ENCODE measurements at regions of chr3 and their contacts with region 1.

Region 1: DNA sequence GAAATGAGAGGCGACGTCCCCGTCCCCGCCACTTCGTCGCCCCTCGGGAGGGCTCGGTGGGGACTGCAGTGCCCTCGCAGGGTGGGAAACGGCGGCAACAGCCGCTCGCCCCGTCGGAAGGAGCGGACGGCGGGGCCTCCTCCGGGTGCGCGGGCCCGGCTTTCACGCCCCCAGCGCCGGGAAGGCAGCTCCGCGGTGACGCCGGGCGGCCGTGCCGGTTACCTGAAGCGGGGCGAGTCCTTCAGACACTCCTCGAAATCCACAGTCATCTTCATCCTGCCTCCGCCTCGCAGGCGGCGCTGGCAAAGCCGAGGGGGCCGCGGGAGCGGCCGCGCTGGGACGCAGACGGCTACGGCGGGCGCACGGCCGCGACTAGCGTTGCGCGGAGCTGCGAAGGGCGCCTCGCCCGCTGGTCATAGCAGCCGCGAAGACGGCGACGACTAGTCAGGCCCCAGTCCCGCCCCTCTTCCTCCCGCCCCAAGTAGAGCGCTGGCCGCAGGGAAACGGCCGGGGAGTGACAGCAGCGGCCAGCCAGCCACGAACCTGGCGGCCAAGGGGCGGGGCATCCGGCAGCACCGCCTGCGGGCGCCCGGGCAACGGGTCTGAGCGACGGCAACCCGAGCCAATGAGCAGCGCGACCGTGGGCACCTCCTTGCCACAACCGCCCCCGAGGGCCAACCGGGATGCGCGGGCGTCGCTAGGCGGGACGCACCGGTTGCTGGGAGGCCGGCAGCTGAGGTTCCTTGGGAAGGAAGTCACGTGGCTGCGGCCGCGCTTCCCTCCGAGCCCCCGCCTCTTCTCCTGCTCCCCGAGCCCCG is at the start of gene ACAP2:
- DNase-seq: peak; percentile 99
- ATAC-seq: peak; percentile 91
- H3K4me3 ChIP-seq: peak within 1 kb of the TSS; percentile 84
- H3K27ac ChIP-seq: no peak within 1 kb of the TSS
- H3K4me1 ChIP-seq: peaks cover 35% of the 10 kb centered on the region
- H3K27me3 ChIP-seq: no peaks in the 10 kb centered on the region
- CTCF ChIP-seq: no peak
- total RNA-seq, gene ACAP2: 27.0 and 33.5 TPM in 2 replicates

Region 2: GRCh38 chr3:195271116-195271858 is 171.5 kb before region 1 on chr3 and contains the start of gene XXYLT1:
- CTCF ChIA-PET with region 1: interaction called, 13 read pairs
- POLR2A ChIA-PET with region 1: interaction called, 4 read pairs
- intact Hi-C with region 1: loop called (anchors 1 kb)
- DNase-seq: peak; percentile 91
- ATAC-seq: peak; percentile 81
- H3K4me3 ChIP-seq: peak within 1 kb of the TSS; percentile 82
- H3K27ac ChIP-seq: peak within 1 kb of the TSS; percentile 57
- H3K4me1 ChIP-seq: peaks cover 21% of the 10 kb centered on the region
- H3K27me3 ChIP-seq: no peaks in the 10 kb centered on the region
- CTCF ChIP-seq: peak; percentile 98
- total RNA-seq, gene XXYLT1: 25.5 and 27.8 TPM in 2 replicates

Region 3: DNA sequence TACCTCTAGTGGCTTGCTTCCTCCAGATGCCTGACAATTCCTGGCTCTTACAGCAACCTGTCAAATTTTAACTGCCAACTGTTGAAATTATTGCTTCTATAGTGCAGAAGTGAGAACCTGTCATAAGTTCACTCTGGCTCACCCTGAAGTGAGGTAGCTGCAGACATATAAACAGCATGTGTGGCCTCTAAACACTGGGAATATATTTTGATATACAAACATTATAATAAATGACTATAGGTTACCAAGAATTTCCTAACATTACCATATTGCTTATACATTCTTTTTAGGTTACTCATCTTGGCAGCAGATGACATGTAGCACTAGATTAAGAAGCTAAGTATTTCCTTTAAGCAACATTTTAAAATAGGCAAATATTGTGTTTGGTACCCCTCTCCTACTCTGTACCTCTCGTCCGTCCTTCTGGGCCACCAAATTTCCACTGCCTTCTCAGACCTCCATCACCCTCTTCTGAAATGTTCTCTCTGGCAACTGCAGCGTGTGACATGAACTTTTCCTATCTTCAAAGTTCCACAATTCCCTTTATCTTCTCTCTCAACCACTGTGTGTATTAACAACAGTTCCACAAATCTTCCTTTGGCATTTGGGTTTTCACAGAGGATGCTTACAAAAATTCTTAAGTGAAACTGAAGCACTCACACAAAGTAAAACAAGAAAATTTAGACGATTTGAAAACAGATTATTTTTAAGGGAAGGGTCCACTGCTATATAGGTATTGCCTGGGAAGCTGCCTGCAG is 156.5 kb before region 1 on chr3:
- CTCF ChIA-PET with region 1: no interaction called
- POLR2A ChIA-PET with region 1: no interaction called
- intact Hi-C with region 1: loop called (anchors 5 kb)
- DNase-seq: peak; percentile 77
- ATAC-seq: peak; percentile 92
- H3K4me3 ChIP-seq: no peak overlapping the region
- H3K27ac ChIP-seq: no peak overlapping the region; the same call in 1 of the 2 replicates
- H3K4me1 ChIP-seq: peaks cover 18% of the 10 kb centered on the region
- H3K27me3 ChIP-seq: no peaks in the 10 kb centered on the region
- CTCF ChIP-seq: no peak

Region 4: GRCh38 chr3:195352895-195353488 is 89.8 kb before region 1 on chr3:
- CTCF ChIA-PET with region 1: no interaction called
- POLR2A ChIA-PET with region 1: no interaction called
- intact Hi-C with region 1: loop called (anchors 5 kb)
- DNase-seq: peak; percentile 65
- ATAC-seq: peak; percentile 97
- H3K4me3 ChIP-seq: no peak overlapping the region
- H3K27ac ChIP-seq: no peak overlapping the region
- H3K4me1 ChIP-seq: 0 out of 2 replicates have a peak, but pooled peaks cover 7% of the 10 kb centered on the region
- H3K27me3 ChIP-seq: no peaks in the 10 kb centered on the region
- CTCF ChIP-seq: no peak

Region 5: DNA sequence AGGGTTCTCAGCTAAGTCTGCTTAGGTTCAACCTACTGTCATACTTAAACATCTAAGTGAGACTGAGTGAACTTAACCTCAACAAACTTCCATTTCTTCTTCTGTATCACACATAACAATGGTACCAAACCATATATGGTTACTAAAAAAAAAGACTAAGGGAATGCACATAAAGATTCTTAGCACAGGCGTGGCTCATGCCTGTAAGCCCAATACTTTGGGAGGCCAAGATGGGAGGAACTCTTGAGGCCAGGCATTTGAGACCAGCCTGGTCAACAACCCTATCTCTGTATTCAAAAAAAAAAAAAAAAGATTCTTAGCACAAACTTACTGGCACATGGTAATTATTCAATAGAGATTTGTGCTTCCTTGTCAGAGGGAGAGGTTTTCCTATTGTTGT is 57.8 kb before region 1 on chr3:
- CTCF ChIA-PET with region 1: no interaction called
- POLR2A ChIA-PET with region 1: no interaction called
- intact Hi-C with region 1: loop called (anchors 5 kb)
- DNase-seq: peak; percentile 37
- ATAC-seq: peak; percentile 35; the same call in 1 of the 2 replicates
- H3K4me3 ChIP-seq: no peak overlapping the region
- H3K27ac ChIP-seq: no peak overlapping the region
- H3K4me1 ChIP-seq: peaks cover 9% of the 10 kb centered on the region; the same call in 1 of the 2 replicates
- H3K27me3 ChIP-seq: no peaks in the 10 kb centered on the region
- CTCF ChIP-seq: no peak

Region 6: DNA sequence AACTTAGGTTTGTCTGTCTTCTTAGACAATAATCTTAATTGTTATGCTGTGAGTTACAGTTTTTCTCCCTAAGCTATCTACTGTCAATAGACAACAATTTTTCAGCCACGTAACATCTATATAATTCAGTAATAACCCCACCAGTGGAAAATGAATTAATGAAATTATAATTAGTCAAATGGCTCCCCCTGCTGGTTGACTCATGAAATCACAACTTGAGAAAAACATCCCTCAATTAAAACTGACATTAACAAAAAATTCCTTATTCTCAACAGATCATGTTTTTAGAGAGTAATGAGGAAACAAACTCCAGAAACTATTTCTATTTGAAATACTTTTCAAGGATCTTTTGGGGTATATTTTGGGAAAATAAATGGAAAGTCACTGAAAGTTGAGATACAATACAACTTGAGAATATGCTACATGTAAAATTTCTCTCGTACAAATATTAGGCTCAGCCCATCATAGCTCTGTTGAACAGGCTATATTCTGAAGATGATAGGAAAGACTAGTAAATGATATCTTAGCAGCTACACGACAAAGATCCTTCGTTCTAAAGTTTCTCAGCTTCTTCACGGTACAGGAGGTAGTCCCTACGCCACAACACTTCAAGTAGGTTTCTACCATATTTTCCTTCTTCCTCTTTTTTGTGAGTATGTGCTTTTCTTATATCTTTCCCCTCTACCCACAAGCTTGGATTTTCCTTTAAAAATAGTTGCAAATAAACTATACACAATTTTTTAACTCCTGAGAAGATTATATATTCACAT is 79.7 kb after region 1 on chr3:
- CTCF ChIA-PET with region 1: no interaction called
- POLR2A ChIA-PET with region 1: no interaction called
- intact Hi-C with region 1: loop called (anchors 2 kb)
- DNase-seq: peak; percentile 57
- ATAC-seq: no peak
- H3K4me3 ChIP-seq: no peak overlapping the region
- H3K27ac ChIP-seq: no peak overlapping the region
- H3K4me1 ChIP-seq: peaks cover 23% of the 10 kb centered on the region
- H3K27me3 ChIP-seq: no peaks in the 10 kb centered on the region
- CTCF ChIP-seq: peak; percentile 91

Measured in PC-3 (cell line).